Mammary epithelial cell (primary cell): ENCODE measurements at regions of chr1 and their contacts with region 1.

Region 1: DNA sequence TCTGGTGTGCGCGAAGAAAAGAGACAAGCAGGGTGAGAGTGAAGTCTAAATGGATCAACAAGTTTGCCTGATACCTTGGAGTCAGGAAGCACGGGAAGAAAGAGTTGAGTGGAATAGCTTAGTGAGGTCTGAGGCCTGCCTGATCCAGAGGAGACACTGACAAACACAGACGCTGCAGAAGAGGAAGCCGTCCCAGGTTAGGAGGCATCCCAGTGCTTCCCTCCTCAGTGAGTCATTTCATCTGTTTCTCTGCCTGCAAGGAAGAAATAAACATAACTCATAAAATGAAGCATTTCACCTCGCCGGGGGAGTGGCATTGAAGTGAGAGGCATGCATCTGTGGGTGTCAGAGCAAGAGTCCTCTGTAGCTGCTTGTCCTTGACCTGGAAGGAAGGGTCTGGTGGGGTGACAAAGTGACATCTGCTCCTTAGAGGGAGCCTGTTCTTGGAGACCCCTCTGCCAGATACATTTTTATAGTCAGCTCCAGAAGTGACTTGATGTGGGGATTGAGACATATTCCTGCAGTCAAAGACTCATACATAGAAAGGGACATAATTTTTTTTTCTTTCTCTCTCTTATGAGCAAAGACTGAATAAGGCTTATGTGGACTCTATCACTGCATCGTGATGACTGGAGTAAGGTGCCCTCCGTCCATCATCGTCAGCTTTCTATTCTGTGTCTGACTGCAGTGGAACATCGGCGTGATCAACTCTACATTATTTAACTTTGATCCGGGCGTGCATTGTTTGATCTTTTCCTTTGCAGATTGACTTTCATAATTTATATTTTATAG is 256.7 kb downstream of the KIF26B start:
- DNase-seq: no peak
- H3K4me3 ChIP-seq: no peak overlapping the region
- H3K27ac ChIP-seq: no peak overlapping the region
- H3K4me1 ChIP-seq: no peaks in the 10 kb centered on the region
- H3K27me3 ChIP-seq: no peaks in the 10 kb centered on the region
- CTCF ChIP-seq: no peak

Region 2: GRCh38 chr1:245380790-245381535 is 30.5 kb before region 1 on chr1:
- CTCF ChIA-PET with region 1: no interaction called
- dilution Hi-C with region 1: loop called (anchors 5 kb)
- in situ Hi-C with region 1: no loop called
- intact Hi-C with region 1: no loop called
- DNase-seq: no peak
- H3K4me3 ChIP-seq: no peak overlapping the region
- H3K27ac ChIP-seq: no peak overlapping the region
- H3K4me1 ChIP-seq: no peaks in the 10 kb centered on the region
- H3K27me3 ChIP-seq: no peaks in the 10 kb centered on the region
- CTCF ChIP-seq: no peak

Region 3: DNA sequence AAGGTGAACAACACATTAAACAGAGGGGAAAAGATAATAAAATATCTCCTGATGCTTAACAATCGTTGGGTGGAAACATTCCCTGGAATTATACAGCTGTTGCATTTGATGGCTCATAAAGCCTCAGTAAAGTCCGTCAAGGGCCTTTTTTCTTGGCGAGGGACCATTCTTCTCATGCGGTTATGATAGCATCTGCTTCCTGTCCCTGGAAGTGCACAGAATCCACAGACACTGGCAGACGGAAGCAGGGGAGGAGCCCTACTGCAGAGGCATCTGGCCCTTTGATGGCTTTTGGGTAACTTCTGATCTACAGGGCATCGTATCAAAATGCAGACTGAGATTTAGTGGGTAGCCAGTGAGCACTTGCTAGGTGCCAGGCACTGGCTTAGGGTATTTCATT is 30.2 kb after region 1 on chr1:
- CTCF ChIA-PET with region 1: no interaction called
- dilution Hi-C with region 1: no loop called
- in situ Hi-C with region 1: no loop called
- intact Hi-C with region 1: no loop called
- DNase-seq: no peak
- H3K4me3 ChIP-seq: no peak overlapping the region
- H3K27ac ChIP-seq: no peak overlapping the region
- H3K4me1 ChIP-seq: no peaks in the 10 kb centered on the region
- H3K27me3 ChIP-seq: no peaks in the 10 kb centered on the region
- CTCF ChIP-seq: no peak

Region 4: GRCh38 chr1:245493029-245493428 is 81.6 kb after region 1 on chr1:
- CTCF ChIA-PET with region 1: no interaction called
- dilution Hi-C with region 1: loop called (anchors 5 kb)
- in situ Hi-C with region 1: no loop called
- intact Hi-C with region 1: no loop called
- DNase-seq: no peak
- H3K4me3 ChIP-seq: no peak overlapping the region
- H3K27ac ChIP-seq: no peak overlapping the region
- H3K4me1 ChIP-seq: peaks cover 7% of the 10 kb centered on the region
- H3K27me3 ChIP-seq: no peaks in the 10 kb centered on the region
- CTCF ChIP-seq: peak in 1 of 2 donors; percentile 8